Caco-2 (cell line): ENCODE measurements at regions of chr10 and their contacts with region 1.

Region 1: DNA sequence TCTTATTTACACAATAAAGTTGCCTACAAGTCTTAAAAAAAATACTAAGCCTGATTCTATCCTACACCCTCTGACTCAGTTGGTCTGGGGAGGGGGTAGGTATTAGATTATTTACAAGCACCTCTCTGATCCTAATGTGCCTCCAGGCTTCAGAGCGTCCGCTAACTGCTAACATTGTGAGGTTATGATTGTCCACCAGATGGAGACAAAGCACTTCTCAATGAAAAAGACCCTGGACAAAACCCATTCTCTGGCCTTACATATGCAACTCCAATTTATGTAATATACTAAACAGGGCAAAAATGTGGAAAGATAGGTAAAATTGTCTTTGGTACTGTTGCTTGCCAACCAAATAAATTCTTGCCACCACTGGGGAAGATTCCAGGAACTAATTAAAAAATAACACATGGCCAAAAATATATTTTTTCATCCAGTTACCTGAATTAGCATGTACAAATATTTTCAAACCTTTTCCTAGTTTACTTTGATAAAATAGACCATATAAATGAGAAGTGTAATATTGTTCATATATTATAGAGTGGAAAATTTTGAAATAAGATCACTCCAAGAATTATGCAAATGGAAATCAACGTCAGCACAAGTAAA is 92.4 kb downstream of the KIF20B start:
- DNase-seq: peak in 1 of 2 experiments; percentile 70
- H3K4me3 ChIP-seq: no peak overlapping the region
- H3K4me3 Mint-ChIP-seq: no peak overlapping the region
- H3K27ac Mint-ChIP-seq: no peak overlapping the region
- H3K4me1 ChIP-seq: no peaks in the 10 kb centered on the region
- H3K4me1 Mint-ChIP-seq: no peaks in the 10 kb centered on the region
- H3K27me3 ChIP-seq: no peaks in the 10 kb centered on the region
- H3K27me3 Mint-ChIP-seq: no peaks in the 10 kb centered on the region
- CTCF ChIP-seq: peak; percentile 82 to 87

Region 2: DNA sequence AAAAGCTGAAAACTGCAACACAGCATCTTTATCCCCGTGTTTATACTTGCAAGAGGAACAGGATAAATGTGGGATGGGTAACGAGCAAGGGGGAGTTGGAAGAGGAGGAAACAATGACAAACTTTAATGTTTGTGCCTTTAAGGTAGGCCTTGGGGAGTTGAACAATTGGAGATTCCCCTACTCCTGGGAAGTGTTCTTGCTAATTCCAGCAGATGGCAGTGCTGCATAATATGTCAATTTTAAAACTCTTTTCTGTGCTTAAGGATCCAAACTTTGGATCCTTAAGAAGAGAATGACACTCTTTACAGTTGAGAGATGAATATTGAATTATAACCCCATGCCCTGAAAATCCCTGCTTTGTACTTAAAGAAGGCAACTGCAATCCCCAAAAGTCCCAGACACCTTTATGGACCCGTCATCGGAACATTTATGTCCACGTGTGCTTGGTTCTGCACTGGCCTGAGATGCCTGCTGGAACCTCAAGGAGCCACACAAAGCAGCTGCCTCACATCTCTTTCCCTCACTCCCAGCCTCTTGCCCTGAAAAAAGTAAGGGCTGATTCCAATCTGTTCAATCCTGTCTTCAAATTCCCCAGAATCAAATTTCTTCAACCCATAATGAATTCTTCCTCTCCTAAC is 367.4 kb before region 1 on chr10:
- CTCF ChIA-PET with region 1: no interaction called
- POLR2A ChIA-PET with region 1: no interaction called
- intact Hi-C with region 1: loop called (anchors 1 kb)
- DNase-seq: peak in 1 of 2 experiments; percentile 42
- H3K4me3 ChIP-seq: no peak overlapping the region
- H3K4me3 Mint-ChIP-seq: no peak overlapping the region
- H3K27ac Mint-ChIP-seq: no peak overlapping the region
- H3K4me1 ChIP-seq: peaks cover 14% of the 10 kb centered on the region
- H3K4me1 Mint-ChIP-seq: peaks cover 18% of the 10 kb centered on the region
- H3K27me3 ChIP-seq: no peaks in the 10 kb centered on the region
- H3K27me3 Mint-ChIP-seq: peaks cover 5% of the 10 kb centered on the region
- CTCF ChIP-seq: peak; percentile 62 to 77

Region 3: GRCh38 chr10:89684604-89685003 is 109.1 kb before region 1 on chr10:
- CTCF ChIA-PET with region 1: no interaction called
- POLR2A ChIA-PET with region 1: no interaction called
- intact Hi-C with region 1: no loop called
- DNase-seq: no peak
- H3K4me3 ChIP-seq: no peak overlapping the region
- H3K4me3 Mint-ChIP-seq: no peak overlapping the region
- H3K27ac Mint-ChIP-seq: no peak overlapping the region
- H3K4me1 ChIP-seq: no peaks in the 10 kb centered on the region
- H3K4me1 Mint-ChIP-seq: no peaks in the 10 kb centered on the region
- H3K27me3 ChIP-seq: no peaks in the 10 kb centered on the region
- H3K27me3 Mint-ChIP-seq: peaks cover 3% of the 10 kb centered on the region
- CTCF ChIP-seq: no peak

Region 4: GRCh38 chr10:89954787-89955566 is 161.2 kb after region 1 on chr10:
- CTCF ChIA-PET with region 1: no interaction called
- POLR2A ChIA-PET with region 1: no interaction called
- intact Hi-C with region 1: loop called (anchors 2 kb)
- DNase-seq: no peak
- H3K4me3 ChIP-seq: no peak overlapping the region
- H3K4me3 Mint-ChIP-seq: no peak overlapping the region
- H3K27ac Mint-ChIP-seq: no peak overlapping the region
- H3K4me1 ChIP-seq: no peaks in the 10 kb centered on the region
- H3K4me1 Mint-ChIP-seq: no peaks in the 10 kb centered on the region
- H3K27me3 ChIP-seq: no peaks in the 10 kb centered on the region
- H3K27me3 Mint-ChIP-seq: peaks cover 3% of the 10 kb centered on the region
- CTCF ChIP-seq: peak; percentile 19 to 40

Region 5: GRCh38 chr10:90148116-90148855 is 354.5 kb after region 1 on chr10:
- CTCF ChIA-PET with region 1: no interaction called
- POLR2A ChIA-PET with region 1: no interaction called
- intact Hi-C with region 1: loop called (anchors 1 kb)
- DNase-seq: peak in 1 of 2 experiments; percentile 16
- H3K4me3 ChIP-seq: no peak overlapping the region
- H3K4me3 Mint-ChIP-seq: no peak overlapping the region
- H3K27ac Mint-ChIP-seq: no peak overlapping the region
- H3K4me1 ChIP-seq: no peaks in the 10 kb centered on the region
- H3K4me1 Mint-ChIP-seq: no peaks in the 10 kb centered on the region
- H3K27me3 ChIP-seq: no peaks in the 10 kb centered on the region
- H3K27me3 Mint-ChIP-seq: peaks cover 8% of the 10 kb centered on the region
- CTCF ChIP-seq: peak; percentile 29 to 54

Region 6: DNA sequence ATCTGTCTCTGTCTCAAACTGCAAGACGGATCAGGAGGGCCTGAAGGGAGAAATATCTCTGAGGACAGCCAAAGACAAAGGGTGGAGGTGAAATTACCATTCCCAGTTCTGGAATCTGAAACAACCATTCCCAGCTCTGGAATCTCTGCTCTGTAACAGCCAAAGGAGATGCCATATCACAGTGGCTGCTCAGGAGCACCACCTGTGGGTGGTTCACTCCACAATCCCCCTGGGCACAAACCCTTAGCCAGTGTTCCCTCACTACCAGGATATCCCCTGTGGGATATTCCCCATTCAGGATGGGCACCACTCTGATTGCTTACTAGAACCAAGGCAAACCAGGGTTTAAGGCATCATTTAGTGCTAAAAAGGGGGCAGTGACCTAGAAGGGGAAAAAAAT is 865.0 kb after region 1 on chr10:
- CTCF ChIA-PET with region 1: no interaction called
- POLR2A ChIA-PET with region 1: no interaction called
- intact Hi-C with region 1: loop called (anchors 5 kb)
- DNase-seq: peak in 1 of 2 experiments; percentile 7
- H3K4me3 ChIP-seq: no peak overlapping the region
- H3K4me3 Mint-ChIP-seq: no peak overlapping the region
- H3K27ac Mint-ChIP-seq: no peak overlapping the region
- H3K4me1 ChIP-seq: no peaks in the 10 kb centered on the region
- H3K4me1 Mint-ChIP-seq: no peaks in the 10 kb centered on the region
- H3K27me3 ChIP-seq: no peaks in the 10 kb centered on the region
- H3K27me3 Mint-ChIP-seq: peaks cover 5% of the 10 kb centered on the region
- CTCF ChIP-seq: peak; percentile 36 to 46

Region 7: GRCh38 chr10:90871766-90872647 is 1078.3 kb after region 1 on chr10 and contains the start of gene RPP30:
- CTCF ChIA-PET with region 1: no interaction called
- POLR2A ChIA-PET with region 1: no interaction called
- intact Hi-C with region 1: loop called (anchors 1 kb)
- DNase-seq: peak; percentile 85 to 89
- H3K4me3 ChIP-seq: peak within 1 kb of the TSS; percentile 71
- H3K4me3 Mint-ChIP-seq: peak within 1 kb of the TSS; percentile 96
- H3K27ac Mint-ChIP-seq: peak within 1 kb of the TSS; percentile 85
- H3K4me1 ChIP-seq: peaks cover 6% of the 10 kb centered on the region; the same call in 1 of the 2 replicates
- H3K4me1 Mint-ChIP-seq: peaks cover 6% of the 10 kb centered on the region
- H3K27me3 ChIP-seq: no peaks in the 10 kb centered on the region
- H3K27me3 Mint-ChIP-seq: peaks cover 3% of the 10 kb centered on the region
- CTCF ChIP-seq: no peak
- total RNA-seq, gene RPP30: 66.5 and 67.6 TPM in 2 replicates